ENCODE measurements at regions of chr22 and their contacts with region 1.

Region 1: DNA sequence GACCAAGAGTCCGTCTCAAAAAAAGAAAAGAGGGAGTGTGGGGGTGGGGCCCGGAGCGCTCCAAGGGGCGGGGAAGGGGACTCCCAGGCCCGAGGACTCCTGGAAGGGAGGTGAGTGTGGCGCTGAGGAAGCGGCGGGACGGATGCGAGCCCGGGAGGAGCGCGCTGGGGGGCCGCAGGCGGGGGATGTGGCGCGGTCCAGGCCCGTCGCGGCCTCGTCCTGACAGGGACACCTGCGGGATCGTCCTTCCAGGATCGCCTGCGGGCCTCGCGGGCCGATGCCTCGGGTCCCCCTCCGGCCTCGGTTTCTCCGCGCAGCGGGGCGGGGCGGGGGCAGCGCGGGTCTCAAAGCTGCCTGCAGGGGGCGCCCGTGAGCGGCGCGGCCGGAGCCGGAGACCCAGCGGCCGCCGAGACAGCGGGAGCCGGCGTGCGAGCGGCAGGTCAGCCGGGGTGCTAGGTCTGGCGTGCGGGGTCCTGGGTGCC is 3.8 kb upstream of the ADORA2A start:
- DNase-seq: peak; percentile 73
- H3K4me3 Mint-ChIP-seq: peak overlapping the region; percentile 59
- H3K27ac Mint-ChIP-seq: no peak overlapping the region
- H3K4me1 Mint-ChIP-seq: peaks cover 25% of the 10 kb centered on the region
- H3K27me3 Mint-ChIP-seq: peaks cover 5% of the 10 kb centered on the region

Region 2: DNA sequence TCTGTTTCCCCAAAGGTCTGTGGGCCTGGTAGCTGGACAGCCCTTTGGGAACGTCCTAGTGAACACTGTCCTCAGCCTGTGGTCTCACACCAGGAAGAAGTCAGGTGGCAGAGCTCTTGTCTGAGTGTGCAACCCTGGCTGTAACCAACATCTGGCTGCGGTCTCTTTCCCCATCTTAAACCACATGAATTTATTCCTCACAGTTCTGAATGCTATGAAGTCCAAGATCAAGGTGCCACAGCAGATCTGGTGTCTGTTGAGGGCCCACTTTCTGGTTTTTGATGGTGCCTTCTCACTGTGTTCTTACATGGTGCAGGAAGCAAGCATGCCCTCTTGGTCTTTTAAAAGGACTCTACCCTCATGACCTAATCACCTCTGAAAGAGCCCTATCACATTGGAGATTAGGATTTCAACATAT is 74.3 kb after region 1 on chr22:
- CTCF ChIA-PET with region 1: interaction called, 102 read pairs
- POLR2A ChIA-PET with region 1: no interaction called
- intact Hi-C with region 1: loop called (anchors 1 kb)
- DNase-seq: no peak
- H3K4me3 Mint-ChIP-seq: no peak overlapping the region
- H3K27ac Mint-ChIP-seq: no peak overlapping the region
- H3K4me1 Mint-ChIP-seq: no peaks in the 10 kb centered on the region
- H3K27me3 Mint-ChIP-seq: peaks cover 11% of the 10 kb centered on the region

Region 3: GRCh38 chr22:24503137-24503842 is 79.7 kb after region 1 on chr22:
- CTCF ChIA-PET with region 1: interaction called, 102 read pairs
- POLR2A ChIA-PET with region 1: no interaction called
- intact Hi-C with region 1: loop called (anchors 1 kb)
- DNase-seq: peak; percentile 79
- H3K4me3 Mint-ChIP-seq: no peak overlapping the region
- H3K27ac Mint-ChIP-seq: no peak overlapping the region
- H3K4me1 Mint-ChIP-seq: peaks cover 7% of the 10 kb centered on the region
- H3K27me3 Mint-ChIP-seq: no peaks in the 10 kb centered on the region

Region 4: GRCh38 chr22:24525416-24526037 is 102.0 kb after region 1 on chr22:
- CTCF ChIA-PET with region 1: interaction called, 15 read pairs
- POLR2A ChIA-PET with region 1: no interaction called
- intact Hi-C with region 1: loop called (anchors 1 kb)
- DNase-seq: peak; percentile 90
- H3K4me3 Mint-ChIP-seq: no peak overlapping the region
- H3K27ac Mint-ChIP-seq: no peak overlapping the region
- H3K4me1 Mint-ChIP-seq: peaks cover 11% of the 10 kb centered on the region
- H3K27me3 Mint-ChIP-seq: no peaks in the 10 kb centered on the region

Measured in activated CD4-positive, alpha-beta memory T cell treated with anti-CD3 and anti-CD28 coated beads for 36 hours (primary cell).